ENCODE measurements at regions of chr5 and their contacts with region 1.

Region 1: GRCh38 chr5:173057062-173057924 is 1.1 kb downstream of the CREBRF start:
- DNase-seq: peak; percentile 98
- ATAC-seq: peak; percentile 80
- H3K4me3 Mint-ChIP-seq: peak overlapping the region; percentile 96
- H3K27ac Mint-ChIP-seq: peak overlapping the region; percentile 95
- H3K4me1 Mint-ChIP-seq: peaks cover 55% of the 10 kb centered on the region
- H3K27me3 Mint-ChIP-seq: no peaks in the 10 kb centered on the region
- CTCF ChIP-seq: no peak

Region 2: GRCh38 chr5:171387345-171387969 is 1669.8 kb before region 1 on chr5 and contains the start of gene NPM1:
- CTCF ChIA-PET with region 1: no interaction called
- POLR2A ChIA-PET with region 1: no interaction called
- intact Hi-C with region 1: loop called (anchors 2 kb)
- DNase-seq: peak; percentile 92
- ATAC-seq: peak; percentile 85
- H3K4me3 Mint-ChIP-seq: peak within 1 kb of the TSS; percentile 99
- H3K27ac Mint-ChIP-seq: peak within 1 kb of the TSS; percentile 98
- H3K4me1 Mint-ChIP-seq: peaks cover 52% of the 10 kb centered on the region
- H3K27me3 Mint-ChIP-seq: no peaks in the 10 kb centered on the region
- CTCF ChIP-seq: no peak
- total RNA-seq, gene NPM1: 1,505 and 1,563 TPM in 2 replicates

Region 3: GRCh38 chr5:172188033-172188892 is 869.0 kb before region 1 on chr5 and contains the start of gene STK10:
- CTCF ChIA-PET with region 1: no interaction called
- POLR2A ChIA-PET with region 1: no interaction called
- intact Hi-C with region 1: loop called (anchors 2 kb)
- DNase-seq: peak; percentile 88
- ATAC-seq: peak; percentile 75
- H3K4me3 Mint-ChIP-seq: peak within 1 kb of the TSS; percentile 100
- H3K27ac Mint-ChIP-seq: peak within 1 kb of the TSS; percentile 97
- H3K4me1 Mint-ChIP-seq: peaks cover 44% of the 10 kb centered on the region
- H3K27me3 Mint-ChIP-seq: no peaks in the 10 kb centered on the region
- CTCF ChIP-seq: peak; percentile 37
- total RNA-seq, gene STK10: 233 and 276 TPM in 2 replicates

Region 4: GRCh38 chr5:172770675-172771438 is 286.4 kb before region 1 on chr5 and contains the start of gene DUSP1:
- CTCF ChIA-PET with region 1: no interaction called
- POLR2A ChIA-PET with region 1: interaction called, 3 read pairs
- intact Hi-C with region 1: loop called (anchors 1 kb)
- DNase-seq: peak; percentile 96
- ATAC-seq: peak; percentile 53
- H3K4me3 Mint-ChIP-seq: peak within 1 kb of the TSS; percentile 92
- H3K27ac Mint-ChIP-seq: peak within 1 kb of the TSS; percentile 99
- H3K4me1 Mint-ChIP-seq: peaks cover 73% of the 10 kb centered on the region
- H3K27me3 Mint-ChIP-seq: no peaks in the 10 kb centered on the region
- CTCF ChIP-seq: no peak
- total RNA-seq, gene DUSP1: 15.0 and 21.2 TPM in 2 replicates

Region 5: GRCh38 chr5:172984243-172984953 is 72.9 kb before region 1 on chr5:
- CTCF ChIA-PET with region 1: interaction called, 9 read pairs
- POLR2A ChIA-PET with region 1: interaction called, 54 read pairs
- intact Hi-C with region 1: loop called (anchors 1 kb)
- DNase-seq: peak; percentile 48
- ATAC-seq: peak; percentile 67
- H3K4me3 Mint-ChIP-seq: peak overlapping the region; percentile 98
- H3K27ac Mint-ChIP-seq: peak overlapping the region; percentile 96
- H3K4me1 Mint-ChIP-seq: peaks cover 44% of the 10 kb centered on the region
- H3K27me3 Mint-ChIP-seq: no peaks in the 10 kb centered on the region
- CTCF ChIP-seq: no peak

Region 6: DNA sequence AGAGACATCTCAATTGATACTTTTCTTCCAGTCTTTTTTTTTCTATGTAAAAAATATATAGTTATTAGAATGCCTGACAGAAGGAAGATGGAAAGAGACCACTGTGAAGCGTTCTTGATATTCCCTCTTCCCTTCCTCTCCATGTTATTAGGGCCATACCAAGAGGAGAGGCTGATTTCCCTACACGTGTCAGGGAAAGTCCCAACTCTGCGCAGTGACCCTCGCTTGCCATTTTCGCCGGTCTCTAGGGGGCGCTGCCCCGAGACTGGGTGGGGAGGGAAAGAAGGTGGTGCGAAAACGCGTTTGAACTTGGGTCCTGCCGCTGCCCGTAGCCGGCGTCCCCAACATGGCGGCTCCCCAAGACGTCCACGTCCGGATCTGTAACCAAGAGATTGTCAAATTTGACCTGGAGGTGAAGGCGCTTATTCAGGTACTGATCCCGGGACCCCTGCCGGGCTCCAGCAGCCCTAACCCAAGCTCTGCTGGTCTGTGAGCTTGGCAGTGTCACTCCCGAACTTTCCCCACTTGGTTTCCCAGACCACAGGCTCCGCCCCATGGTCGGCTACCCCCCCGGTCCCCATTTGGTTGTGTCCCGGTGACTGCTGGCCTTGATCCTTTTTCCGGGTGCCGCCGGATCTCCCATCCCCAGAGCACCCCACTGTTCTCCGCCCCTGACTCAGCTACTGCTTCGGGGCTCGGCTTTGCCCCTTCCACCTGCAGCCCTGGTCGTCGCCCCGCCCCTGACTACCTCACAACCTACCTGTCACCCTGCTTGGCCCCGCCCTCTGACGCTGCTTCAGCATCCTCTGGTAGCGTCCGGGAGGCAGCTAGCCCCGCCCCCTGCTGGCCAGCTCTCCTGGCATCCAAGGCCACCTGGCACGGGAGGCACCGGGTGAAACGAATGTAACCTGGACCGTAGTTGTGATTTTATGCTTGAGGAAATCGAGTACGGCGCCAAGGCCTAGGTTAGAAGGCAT is 87.2 kb after region 1 on chr5 and contains the start of gene BNIP1:
- CTCF ChIA-PET with region 1: interaction called, 3 read pairs
- POLR2A ChIA-PET with region 1: interaction called, 21 read pairs
- intact Hi-C with region 1: loop called (anchors 1 kb)
- DNase-seq: peak; percentile 97
- ATAC-seq: peak; percentile 90
- H3K4me3 Mint-ChIP-seq: peak within 1 kb of the TSS; percentile 99
- H3K27ac Mint-ChIP-seq: peak within 1 kb of the TSS; percentile 97
- H3K4me1 Mint-ChIP-seq: peaks cover 12% of the 10 kb centered on the region
- H3K27me3 Mint-ChIP-seq: no peaks in the 10 kb centered on the region
- CTCF ChIP-seq: peak; percentile 54
- total RNA-seq, gene BNIP1: 17.9 and 20.2 TPM in 2 replicates

Region 7: DNA sequence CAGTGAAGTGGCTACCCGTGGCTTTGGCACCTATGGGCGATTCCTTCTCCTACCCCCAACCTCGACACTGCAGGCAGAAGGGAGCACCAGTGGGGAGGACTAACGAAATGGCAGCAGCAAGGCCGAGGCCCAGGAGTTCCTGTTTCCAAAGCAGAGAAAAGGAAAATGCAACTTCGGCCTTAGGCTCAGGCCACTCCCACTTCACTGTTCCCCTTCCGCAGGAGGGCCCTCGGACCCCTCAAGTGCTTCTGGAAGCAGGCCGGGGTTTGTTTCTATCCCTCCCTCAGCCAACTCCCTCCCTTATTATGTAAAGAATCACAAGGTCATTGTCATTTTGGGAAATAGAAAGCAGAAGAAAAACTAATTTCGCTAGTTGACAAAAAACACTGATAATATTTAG is 214.1 kb after region 1 on chr5:
- CTCF ChIA-PET with region 1: no interaction called
- POLR2A ChIA-PET with region 1: no interaction called
- intact Hi-C with region 1: no loop called
- DNase-seq: no peak
- ATAC-seq: no peak
- H3K4me3 Mint-ChIP-seq: no peak overlapping the region
- H3K27ac Mint-ChIP-seq: no peak overlapping the region
- H3K4me1 Mint-ChIP-seq: peaks cover 1% of the 10 kb centered on the region
- H3K27me3 Mint-ChIP-seq: peaks cover 19% of the 10 kb centered on the region
- CTCF ChIP-seq: no peak

Region 8: DNA sequence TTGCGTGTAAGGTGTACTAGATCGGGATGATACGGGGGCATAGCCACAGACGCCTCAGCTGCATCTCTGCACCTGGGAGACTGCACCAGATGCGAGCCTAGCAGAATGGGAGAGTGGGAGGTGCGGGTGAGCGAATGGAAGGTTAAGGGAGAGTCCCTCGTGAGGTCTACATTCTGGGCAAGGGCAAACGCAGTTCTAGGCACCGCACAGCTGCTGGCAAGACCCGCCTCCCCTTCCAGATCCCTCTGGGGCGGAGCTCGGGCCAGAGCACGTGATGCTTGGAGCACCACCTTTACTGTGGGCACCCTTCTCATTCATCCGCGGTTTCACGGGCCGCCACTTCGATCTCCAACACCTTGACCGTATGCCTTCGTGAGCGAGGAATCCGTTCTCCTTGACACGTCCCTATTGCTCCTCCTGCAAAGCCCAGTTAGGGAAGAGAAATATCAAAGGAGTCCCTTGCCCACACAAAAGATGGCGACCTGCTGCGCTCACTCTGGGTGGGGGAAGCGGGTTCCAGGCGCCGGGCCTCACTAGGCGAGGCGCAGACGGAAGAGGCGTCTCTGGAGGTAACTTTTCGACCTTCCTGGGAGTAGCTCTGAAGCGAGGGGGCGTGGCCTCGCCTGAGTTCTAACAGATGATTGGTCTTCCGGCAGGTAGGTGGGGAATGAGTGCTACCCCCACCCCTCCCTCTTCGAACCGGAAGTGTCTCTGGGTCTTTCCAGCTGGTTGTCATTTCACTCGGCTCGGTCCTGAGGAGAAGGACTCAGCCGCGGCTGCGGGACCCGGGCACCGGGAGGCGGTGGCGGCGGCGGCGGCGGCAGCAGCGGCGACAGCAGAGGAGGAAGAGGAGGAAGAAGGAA is 830.5 kb after region 1 on chr5 and contains the start of gene CPEB4:
- CTCF ChIA-PET with region 1: no interaction called
- POLR2A ChIA-PET with region 1: no interaction called
- intact Hi-C with region 1: loop called (anchors 10 kb)
- DNase-seq: peak; percentile 87
- ATAC-seq: peak; percentile 91
- H3K4me3 Mint-ChIP-seq: peak within 1 kb of the TSS; percentile 100
- H3K27ac Mint-ChIP-seq: peak within 1 kb of the TSS; percentile 100
- H3K4me1 Mint-ChIP-seq: peaks cover 87% of the 10 kb centered on the region
- H3K27me3 Mint-ChIP-seq: no peaks in the 10 kb centered on the region
- CTCF ChIP-seq: no peak
- total RNA-seq, gene CPEB4: 26.9 and 30.0 TPM in 2 replicates

Measured in activated B cell treated with CpG ODN at 0.5 μM for 24 hours (primary cell).